H1 (cell line): ENCODE measurements at regions of chr22 and their contacts with region 1.

Region 1: DNA sequence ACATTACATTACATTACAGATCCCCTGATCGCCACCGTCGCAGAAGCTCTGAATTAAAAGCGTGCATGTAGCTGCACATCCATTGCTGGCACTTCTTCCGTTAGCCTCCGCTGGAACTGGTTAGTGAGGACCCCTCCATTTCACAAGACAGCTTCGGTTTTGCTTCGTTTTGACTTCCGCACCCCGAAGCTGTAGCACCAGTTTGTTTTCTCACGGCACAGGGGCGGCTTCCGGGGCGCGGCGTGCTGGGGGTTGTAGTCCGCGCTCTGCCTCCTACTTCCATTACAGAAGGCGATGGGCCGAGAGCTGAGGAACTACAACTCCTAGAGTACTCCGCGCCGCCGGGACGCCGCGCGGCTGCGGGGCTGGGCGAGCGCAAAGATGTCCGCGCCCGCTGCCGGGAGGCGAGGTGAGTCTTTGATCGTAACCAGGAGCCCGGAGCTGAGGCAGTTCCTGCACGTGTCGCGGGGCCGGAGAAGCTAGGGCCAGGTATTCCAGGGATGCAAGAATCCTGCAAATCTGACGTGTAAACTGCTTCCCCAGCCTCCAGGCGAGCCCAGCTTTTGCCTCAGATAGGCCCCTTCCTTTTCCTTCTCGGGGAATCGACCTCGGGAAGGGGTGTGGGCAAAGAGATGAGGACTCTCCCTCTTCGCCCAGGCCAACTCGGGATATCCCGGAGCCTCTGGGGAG is at the start of gene PEX26:
- DNase-seq: peak; percentile 81 to 86
- H3K4me3 ChIP-seq: peak within 1 kb of the TSS; percentile 88 to 99 (median 97)
- H3K27ac ChIP-seq: peak within 1 kb of the TSS; percentile 84
- H3K4me1 ChIP-seq: 0 out of 7 replicates have a peak, but pooled peaks cover 0 to 3% (median 0%) of the 10 kb centered on the region in 4 experiments
- H3K27me3 ChIP-seq: no peaks in the 10 kb centered on the region
- CTCF ChIP-seq: no peak
- EP300 ChIP-seq: no peak
- POLR2A ChIP-seq: peak in 1 of 2 experiments; percentile 79; a peak in 2 of 3 replicates
- RAD21 ChIP-seq: no peak
- total RNA-seq, gene PEX26: 46.6 and 49.0 TPM in 2 replicates

Region 2: GRCh38 chr22:17742527-17742902 is 335.3 kb before region 1 on chr22:
- CTCF ChIA-PET with region 1: interaction called, 24 read pairs
- POLR2A ChIA-PET with region 1: no interaction called
- DNase-seq: peak; percentile 80 to 96
- H3K4me3 ChIP-seq: no peak overlapping the region
- H3K27ac ChIP-seq: no peak overlapping the region
- H3K4me1 ChIP-seq: peaks cover 0 to 7% (median 4%) of the 10 kb centered on the region in 4 experiments; a peak in 5 of 7 replicates
- H3K27me3 ChIP-seq: no peaks in the 10 kb centered on the region
- CTCF ChIP-seq: peak; percentile 90 to 98 (median 96)
- EP300 ChIP-seq: peak in 1 of 2 experiments; percentile 64; a peak in 1 of 3 replicates
- POLR2A ChIP-seq: no peak
- RAD21 ChIP-seq: peak; percentile 94 to 97

Region 3: GRCh38 chr22:17792299-17792698 is 285.5 kb before region 1 on chr22:
- CTCF ChIA-PET with region 1: interaction called, 27 read pairs
- POLR2A ChIA-PET with region 1: interaction called, 6 read pairs
- DNase-seq: peak in 1 of 2 experiments; percentile 70
- H3K4me3 ChIP-seq: no peak overlapping the region
- H3K27ac ChIP-seq: no peak overlapping the region
- H3K4me1 ChIP-seq: no peaks in the 10 kb centered on the region
- H3K27me3 ChIP-seq: no peaks in the 10 kb centered on the region
- CTCF ChIP-seq: peak; percentile 50 to 69 (median 60)
- EP300 ChIP-seq: no peak
- POLR2A ChIP-seq: no peak
- RAD21 ChIP-seq: peak; percentile 50 to 62

Region 4: DNA sequence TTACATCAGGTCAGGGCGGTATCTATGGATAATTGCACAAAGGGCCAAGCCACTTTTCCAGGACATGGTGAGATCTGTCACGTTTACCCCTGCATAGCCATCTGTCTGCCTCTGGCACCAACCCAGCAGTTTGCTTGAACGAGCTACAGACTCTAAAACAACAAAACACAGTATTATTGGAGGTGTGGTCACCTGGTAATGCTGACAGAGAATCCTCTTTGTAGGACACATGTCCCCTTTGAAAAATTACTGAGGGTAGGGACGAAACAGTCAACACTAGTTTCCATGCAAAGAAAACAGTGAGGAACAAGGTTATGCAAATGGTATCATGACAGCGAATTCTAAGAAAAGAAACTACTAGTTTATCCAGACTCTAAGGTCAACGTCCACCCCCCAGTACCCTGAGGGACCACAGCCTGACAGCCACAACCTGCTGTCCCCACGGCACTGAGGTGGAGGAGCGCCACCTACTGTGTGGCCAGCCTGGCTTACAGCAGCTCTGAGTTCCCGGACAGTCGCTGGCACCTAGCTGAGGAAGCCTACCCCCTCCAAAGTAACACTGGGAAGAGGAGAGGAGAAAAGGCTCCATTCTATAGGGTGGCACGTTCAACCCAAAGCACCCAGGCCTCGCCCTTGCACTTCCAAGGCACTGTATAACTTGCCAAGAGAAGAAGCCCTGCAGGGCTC is 186.2 kb before region 1 on chr22:
- CTCF ChIA-PET with region 1: interaction called, 50 read pairs
- POLR2A ChIA-PET with region 1: no interaction called
- DNase-seq: peak in 1 of 2 experiments; percentile 64
- H3K4me3 ChIP-seq: no peak overlapping the region
- H3K27ac ChIP-seq: no peak overlapping the region
- H3K4me1 ChIP-seq: no peaks in the 10 kb centered on the region
- H3K27me3 ChIP-seq: no peaks in the 10 kb centered on the region
- CTCF ChIP-seq: peak; percentile 60 to 86 (median 71)
- EP300 ChIP-seq: no peak
- POLR2A ChIP-seq: no peak
- RAD21 ChIP-seq: peak; percentile 52 to 64

Region 5: GRCh38 chr22:17910561-17911311 is 167.0 kb before region 1 on chr22:
- CTCF ChIA-PET with region 1: interaction called, 15 read pairs
- POLR2A ChIA-PET with region 1: no interaction called
- DNase-seq: peak in 1 of 2 experiments; percentile 55
- H3K4me3 ChIP-seq: no peak overlapping the region
- H3K27ac ChIP-seq: no peak overlapping the region
- H3K4me1 ChIP-seq: peaks cover 0 to 9% (median 6%) of the 10 kb centered on the region in 4 experiments; a peak in 4 of 7 replicates
- H3K27me3 ChIP-seq: no peaks in the 10 kb centered on the region
- CTCF ChIP-seq: peak; percentile 35 to 58 (median 54); a peak in 3 of 4 replicates
- EP300 ChIP-seq: no peak
- POLR2A ChIP-seq: no peak
- RAD21 ChIP-seq: peak; percentile 76

Region 6: DNA sequence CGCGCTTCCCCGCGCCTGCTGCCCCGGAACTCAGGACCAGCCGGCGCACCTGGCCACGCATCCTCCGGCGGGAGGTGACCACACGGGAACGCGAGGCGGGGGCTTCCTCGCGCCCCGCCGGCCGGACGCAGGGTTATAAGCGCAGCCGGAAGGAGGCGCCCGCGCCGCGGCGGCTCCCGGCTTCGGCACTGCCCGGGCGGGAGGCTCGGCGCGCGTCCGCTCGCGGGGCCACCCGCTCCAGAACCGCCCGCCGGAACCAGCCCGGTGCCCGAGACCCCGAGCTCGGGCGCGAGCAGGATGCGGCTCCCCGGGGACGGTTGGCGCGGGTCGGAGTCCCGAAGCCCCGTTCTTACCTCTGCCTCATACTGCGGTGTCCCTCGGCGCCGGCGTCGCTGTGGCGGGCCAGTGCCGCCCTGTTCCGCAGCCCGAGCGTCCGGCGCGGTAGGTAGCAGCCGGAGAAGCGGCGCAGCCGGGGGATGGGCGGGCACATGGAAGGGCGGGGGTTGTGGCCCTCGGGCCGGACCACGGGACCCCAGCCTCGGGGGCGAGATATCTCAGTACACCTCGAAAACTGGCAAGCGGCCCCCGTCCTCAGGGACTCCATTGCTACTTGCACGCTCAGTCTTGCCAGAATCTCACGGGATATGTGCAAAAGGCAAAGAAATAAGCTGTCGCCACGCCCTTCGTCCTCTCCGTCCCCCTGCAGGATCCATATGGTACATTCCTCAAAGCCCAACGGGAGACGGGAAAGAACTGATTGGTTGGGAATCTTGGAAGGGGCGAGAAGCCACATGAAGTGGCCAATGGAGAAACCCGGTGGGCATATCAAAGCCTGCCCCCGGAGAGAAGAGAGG is 76.5 kb before region 1 on chr22:
- CTCF ChIA-PET with region 1: interaction called, 21 read pairs
- POLR2A ChIA-PET with region 1: interaction called, 3 read pairs
- DNase-seq: peak; percentile 89 to 95
- H3K4me3 ChIP-seq: peak overlapping the region; percentile 53 to 85 (median 56)
- H3K27ac ChIP-seq: peak overlapping the region; percentile 98
- H3K4me1 ChIP-seq: peaks cover 0 to 3% (median 3%) of the 10 kb centered on the region in 4 experiments; a peak in 4 of 7 replicates
- H3K27me3 ChIP-seq: no peaks in the 10 kb centered on the region
- CTCF ChIP-seq: peak; percentile 47 to 55 (median 53)
- EP300 ChIP-seq: peak in 1 of 2 experiments; percentile 96; a peak in 2 of 3 replicates
- POLR2A ChIP-seq: peak; percentile 71 to 82
- RAD21 ChIP-seq: peak; percentile 29 to 64; a peak in 3 of 4 replicates

Region 7: DNA sequence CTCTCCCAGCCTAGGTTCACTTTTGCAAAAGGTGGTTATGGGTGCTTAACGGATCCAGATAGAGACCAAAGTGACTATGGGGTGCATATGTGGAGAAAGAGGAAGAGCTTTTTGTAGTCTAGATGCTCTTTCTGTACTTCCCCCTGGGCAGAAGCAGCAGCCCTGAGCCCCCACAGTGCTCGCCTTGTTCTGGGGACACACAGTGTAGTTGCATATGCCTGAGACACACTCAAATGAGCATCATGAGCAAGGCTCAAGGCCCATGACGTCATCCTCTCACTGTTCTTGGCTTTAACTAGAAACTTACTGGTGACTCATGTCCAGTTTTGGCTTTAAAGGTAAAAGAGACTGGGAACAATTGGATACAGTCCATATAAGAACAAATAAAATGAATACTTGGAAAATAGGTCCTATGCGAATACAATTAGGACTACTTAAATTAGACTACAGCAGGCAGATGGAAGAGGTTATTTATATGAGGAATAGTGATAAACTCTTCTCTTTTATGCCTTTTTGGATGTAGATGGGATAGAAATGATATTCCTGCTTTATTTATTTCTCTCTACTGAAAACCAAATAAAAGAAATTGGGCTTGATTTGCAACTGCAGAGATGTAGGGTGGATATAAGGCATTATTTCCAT is 20.1 kb before region 1 on chr22:
- CTCF ChIA-PET with region 1: interaction called, 70 read pairs
- POLR2A ChIA-PET with region 1: interaction called, 5 read pairs
- DNase-seq: no peak
- H3K4me3 ChIP-seq: no peak overlapping the region
- H3K27ac ChIP-seq: no peak overlapping the region
- H3K4me1 ChIP-seq: peaks cover 0 to 3% (median 0%) of the 10 kb centered on the region in 4 experiments; a peak in 2 of 7 replicates
- H3K27me3 ChIP-seq: no peaks in the 10 kb centered on the region; a peak in 1 of 7 replicates
- CTCF ChIP-seq: no peak
- EP300 ChIP-seq: no peak
- POLR2A ChIP-seq: no peak
- RAD21 ChIP-seq: no peak